B cell (primary cell): ENCODE measurements at regions of chr14 and their contacts with region 1.

Region 1: DNA sequence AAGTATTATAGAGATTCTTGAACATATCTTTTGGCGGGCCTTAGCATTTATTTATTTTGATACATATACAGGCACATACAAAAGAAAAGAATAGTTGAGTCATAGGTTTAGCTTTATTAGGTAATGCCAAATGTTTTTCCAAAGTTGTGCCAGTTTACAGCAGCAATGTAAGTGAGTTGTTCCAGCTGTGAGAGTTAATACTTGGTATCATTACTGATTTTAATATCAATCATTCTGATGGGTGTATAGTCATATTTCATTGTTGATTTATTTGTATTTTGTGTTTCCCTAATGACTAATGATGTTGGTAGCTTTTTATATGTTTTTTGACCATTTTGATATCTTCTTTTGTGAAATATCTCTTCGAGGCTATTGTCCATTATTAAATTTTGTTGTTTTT is 122.4 kb downstream of the MIPOL1 start:
- DNase-seq: no peak
- ATAC-seq: no peak
- H3K4me3 ChIP-seq: no peak overlapping the region
- H3K4me3 Mint-ChIP-seq: no peak overlapping the region
- H3K27ac ChIP-seq: no peak overlapping the region
- H3K27ac Mint-ChIP-seq: no peak overlapping the region
- H3K4me1 ChIP-seq: no peaks in the 10 kb centered on the region
- H3K4me1 Mint-ChIP-seq: no peaks in the 10 kb centered on the region
- H3K27me3 ChIP-seq: no peaks in the 10 kb centered on the region
- H3K27me3 Mint-ChIP-seq: no peaks in the 10 kb centered on the region
- CTCF ChIP-seq: no peak

Region 2: GRCh38 chr14:37384870-37385596 is 64.9 kb after region 1 on chr14:
- CTCF ChIA-PET with region 1: no interaction called
- POLR2A ChIA-PET with region 1: no interaction called
- intact Hi-C with region 1: loop called (anchors 5 kb)
- DNase-seq: no peak
- ATAC-seq: no peak
- H3K4me3 ChIP-seq: no peak overlapping the region
- H3K4me3 Mint-ChIP-seq: no peak overlapping the region
- H3K27ac ChIP-seq: no peak overlapping the region
- H3K27ac Mint-ChIP-seq: no peak overlapping the region
- H3K4me1 ChIP-seq: no peaks in the 10 kb centered on the region
- H3K4me1 Mint-ChIP-seq: no peaks in the 10 kb centered on the region
- H3K27me3 ChIP-seq: no peaks in the 10 kb centered on the region
- H3K27me3 Mint-ChIP-seq: no peaks in the 10 kb centered on the region
- CTCF ChIP-seq: no peak

Region 3: DNA sequence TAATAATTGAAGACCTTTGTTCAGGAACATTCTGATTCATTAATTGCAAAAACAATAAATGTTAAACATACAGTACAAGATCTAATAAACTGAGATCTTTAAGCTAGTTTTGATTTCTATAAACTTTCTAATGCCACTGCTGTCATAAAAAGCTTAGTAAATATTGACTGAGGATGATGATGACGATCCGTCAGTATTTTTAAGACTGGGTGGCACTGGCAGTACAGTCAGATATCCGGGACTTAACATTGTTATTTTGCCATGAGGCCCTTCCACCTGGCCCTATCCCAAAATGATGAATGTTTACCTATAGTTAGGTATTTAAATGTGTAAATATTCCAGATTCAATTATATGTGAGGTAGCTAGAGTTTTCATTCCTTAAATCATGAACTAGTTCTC is 116.4 kb after region 1 on chr14:
- CTCF ChIA-PET with region 1: no interaction called
- POLR2A ChIA-PET with region 1: no interaction called
- intact Hi-C with region 1: no loop called
- DNase-seq: no peak
- ATAC-seq: no peak
- H3K4me3 ChIP-seq: no peak overlapping the region
- H3K4me3 Mint-ChIP-seq: no peak overlapping the region
- H3K27ac ChIP-seq: no peak overlapping the region
- H3K27ac Mint-ChIP-seq: no peak overlapping the region
- H3K4me1 ChIP-seq: no peaks in the 10 kb centered on the region
- H3K4me1 Mint-ChIP-seq: no peaks in the 10 kb centered on the region
- H3K27me3 ChIP-seq: no peaks in the 10 kb centered on the region
- H3K27me3 Mint-ChIP-seq: no peaks in the 10 kb centered on the region
- CTCF ChIP-seq: no peak